ENCODE measurements at regions of chr19 and their contacts with region 1.

Region 1: GRCh38 chr19:12983542-12984142 is 11.6 kb upstream of the NFIX start:
- DNase-seq: peak; percentile 72 to 93 (median 81)
- ATAC-seq: peak; percentile 96
- H3K4me3 ChIP-seq: peak overlapping the region in 1 of 2 donors; percentile 18
- H3K27ac ChIP-seq: no peak overlapping the region
- H3K4me1 ChIP-seq: peaks cover 0 to 21% of the 10 kb centered on the region in 2 donors
- H3K27me3 ChIP-seq: peaks cover 0 to 12% of the 10 kb centered on the region in 2 donors
- CTCF ChIP-seq: peak; percentile 95 to 98

Region 2: GRCh38 chr19:13060964-13061927 is 77.6 kb after region 1 on chr19:
- intact Hi-C with region 1: loop called in 1 of 2 experiments (anchors 5 kb)
- DNase-seq: peak; percentile 84 to 96 (median 88)
- ATAC-seq: peak; percentile 92
- H3K4me3 ChIP-seq: peak overlapping the region in 1 of 2 donors; percentile 34
- H3K27ac ChIP-seq: peak overlapping the region; percentile 61 to 86
- H3K4me1 ChIP-seq: peaks cover 53 to 75% of the 10 kb centered on the region in 2 donors
- H3K27me3 ChIP-seq: peaks cover 0 to 11% of the 10 kb centered on the region in 2 donors
- CTCF ChIP-seq: peak; percentile 95 to 97

Region 3: GRCh38 chr19:13093407-13094105 is 109.9 kb after region 1 on chr19:
- intact Hi-C with region 1: loop called (anchors 5 to 10 kb)
- DNase-seq: peak; percentile 74 to 94 (median 84)
- ATAC-seq: peak; percentile 70
- H3K4me3 ChIP-seq: no peak overlapping the region
- H3K27ac ChIP-seq: peak overlapping the region; percentile 85 to 98
- H3K4me1 ChIP-seq: peaks cover 36 to 54% of the 10 kb centered on the region in 2 donors
- H3K27me3 ChIP-seq: peaks cover 0 to 12% of the 10 kb centered on the region in 2 donors
- CTCF ChIP-seq: peak; percentile 95 to 99

Measured in left lung (tissue), 14 donors.